Activated CD4-positive, alpha-beta memory T cell treated with anti-CD3 and anti-CD28 coated beads for 36 hours (primary cell): ENCODE measurements at regions of chr6 and their contacts with region 1.

Region 1: GRCh38 chr6:26045065-26045927 is 41.9 kb upstream of the HFE start:
- DNase-seq: peak; percentile 81
- H3K4me3 Mint-ChIP-seq: peak overlapping the region; percentile 81
- H3K27ac Mint-ChIP-seq: peak overlapping the region; percentile 97
- H3K4me1 Mint-ChIP-seq: peaks cover 17% of the 10 kb centered on the region
- H3K27me3 Mint-ChIP-seq: peaks cover 8% of the 10 kb centered on the region

Region 2: DNA sequence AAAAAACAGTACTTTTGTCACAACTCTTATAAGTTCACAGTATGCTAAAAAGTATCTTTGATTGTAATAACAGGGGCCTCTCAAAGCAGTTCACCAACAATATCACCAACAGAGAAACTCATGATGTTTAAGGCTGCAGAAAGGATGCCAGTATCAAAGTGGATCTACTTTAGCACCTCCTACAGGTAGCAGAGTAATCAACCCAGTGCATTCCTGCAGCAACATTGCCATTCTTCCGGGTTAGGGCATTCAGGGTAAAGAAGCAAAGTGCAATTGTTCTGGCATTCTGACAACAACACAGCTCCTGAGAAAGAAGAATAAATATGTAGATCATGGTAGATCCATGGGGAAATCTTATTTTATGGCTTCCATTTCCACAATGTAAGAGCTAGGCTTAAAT is 298.3 kb before region 1 on chr6:
- CTCF ChIA-PET with region 1: no interaction called
- POLR2A ChIA-PET with region 1: no interaction called
- intact Hi-C with region 1: no loop called
- DNase-seq: no peak
- H3K4me3 Mint-ChIP-seq: no peak overlapping the region
- H3K27ac Mint-ChIP-seq: no peak overlapping the region
- H3K4me1 Mint-ChIP-seq: no peaks in the 10 kb centered on the region
- H3K27me3 Mint-ChIP-seq: no peaks in the 10 kb centered on the region

Region 3: DNA sequence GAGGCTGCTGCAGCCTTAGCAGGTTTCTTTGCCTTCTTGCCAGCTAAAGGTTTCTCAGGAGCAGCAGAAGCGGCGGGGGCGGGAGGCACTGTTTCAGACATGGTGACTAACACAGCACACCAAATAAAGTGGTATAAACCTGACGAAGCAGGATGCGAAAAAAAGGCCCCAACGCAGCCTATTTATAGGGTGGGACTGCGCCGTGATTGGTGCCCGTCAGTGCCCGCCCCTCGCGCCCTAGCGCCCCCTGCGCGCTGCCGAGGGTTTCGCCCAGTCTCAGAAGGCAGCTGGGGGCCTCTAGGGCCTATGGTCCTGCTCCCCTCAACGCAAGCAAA is 27.7 kb before region 1 on chr6:
- CTCF ChIA-PET with region 1: interaction called, 6 read pairs
- POLR2A ChIA-PET with region 1: interaction called, 675 read pairs
- intact Hi-C with region 1: loop called (anchors 1 kb)
- DNase-seq: peak; percentile 94
- H3K4me3 Mint-ChIP-seq: peak overlapping the region; percentile 74
- H3K27ac Mint-ChIP-seq: peak overlapping the region; percentile 94
- H3K4me1 Mint-ChIP-seq: peaks cover 31% of the 10 kb centered on the region
- H3K27me3 Mint-ChIP-seq: no peaks in the 10 kb centered on the region

Region 4: DNA sequence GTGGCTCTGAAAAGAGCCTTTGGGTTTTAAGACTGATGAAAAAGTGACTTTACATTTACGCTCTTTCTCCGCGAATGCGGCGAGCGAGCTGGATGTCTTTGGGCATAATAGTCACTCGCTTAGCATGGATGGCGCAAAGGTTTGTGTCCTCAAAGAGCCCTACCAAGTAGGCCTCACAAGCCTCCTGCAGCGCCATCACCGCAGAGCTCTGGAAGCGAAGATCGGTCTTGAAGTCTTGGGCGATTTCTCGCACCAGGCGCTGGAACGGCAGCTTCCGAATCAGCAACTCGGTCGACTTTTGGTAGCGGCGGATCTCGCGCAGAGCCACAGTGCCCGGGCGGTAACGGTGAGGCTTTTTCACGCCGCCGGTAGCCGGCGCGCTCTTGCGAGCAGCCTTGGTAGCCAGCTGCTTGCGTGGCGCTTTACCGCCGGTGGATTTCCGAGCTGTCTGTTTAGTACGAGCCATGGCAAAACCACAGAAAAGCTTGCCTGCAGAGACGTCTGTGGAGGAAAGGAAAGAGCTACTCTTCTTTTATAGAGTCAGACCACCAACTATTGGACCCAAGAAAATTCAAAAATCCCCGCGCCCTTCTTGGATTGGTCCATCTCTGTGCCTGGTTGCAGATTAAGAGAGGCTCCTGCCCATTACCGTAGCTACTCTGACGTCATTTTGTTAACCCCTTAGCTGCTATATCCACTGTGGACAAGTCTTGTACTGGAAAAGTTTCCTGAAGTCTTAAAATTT is 13.5 kb before region 1 on chr6:
- CTCF ChIA-PET with region 1: interaction called, 68 read pairs
- POLR2A ChIA-PET with region 1: interaction called, 675 read pairs
- intact Hi-C with region 1: loop called (anchors 1 kb)
- DNase-seq: peak; percentile 93
- H3K4me3 Mint-ChIP-seq: peak overlapping the region; percentile 83
- H3K27ac Mint-ChIP-seq: peak overlapping the region; percentile 99
- H3K4me1 Mint-ChIP-seq: peaks cover 49% of the 10 kb centered on the region
- H3K27me3 Mint-ChIP-seq: peaks cover 17% of the 10 kb centered on the region

Region 5: GRCh38 chr6:26097268-26097875 is 52.1 kb after region 1 on chr6:
- CTCF ChIA-PET with region 1: interaction called, 10 read pairs
- POLR2A ChIA-PET with region 1: no interaction called
- intact Hi-C with region 1: no loop called
- DNase-seq: peak; percentile 72
- H3K4me3 Mint-ChIP-seq: no peak overlapping the region
- H3K27ac Mint-ChIP-seq: no peak overlapping the region
- H3K4me1 Mint-ChIP-seq: peaks cover 4% of the 10 kb centered on the region
- H3K27me3 Mint-ChIP-seq: no peaks in the 10 kb centered on the region

Region 6: GRCh38 chr6:26180346-26180745 is 135.1 kb after region 1 on chr6:
- CTCF ChIA-PET with region 1: no interaction called
- POLR2A ChIA-PET with region 1: no interaction called
- intact Hi-C with region 1: no loop called
- DNase-seq: no peak
- H3K4me3 Mint-ChIP-seq: no peak overlapping the region
- H3K27ac Mint-ChIP-seq: peak overlapping the region; percentile 6
- H3K4me1 Mint-ChIP-seq: peaks cover 39% of the 10 kb centered on the region
- H3K27me3 Mint-ChIP-seq: no peaks in the 10 kb centered on the region

Region 7: GRCh38 chr6:26196846-26197648 is 151.8 kb after region 1 on chr6:
- CTCF ChIA-PET with region 1: interaction called, 4 read pairs
- POLR2A ChIA-PET with region 1: interaction called, 29 read pairs
- intact Hi-C with region 1: no loop called
- DNase-seq: peak; percentile 84
- H3K4me3 Mint-ChIP-seq: peak overlapping the region; percentile 86
- H3K27ac Mint-ChIP-seq: peak overlapping the region; percentile 99
- H3K4me1 Mint-ChIP-seq: peaks cover 31% of the 10 kb centered on the region
- H3K27me3 Mint-ChIP-seq: peaks cover 3% of the 10 kb centered on the region

Region 8: GRCh38 chr6:26234421-26235296 is 189.4 kb after region 1 on chr6:
- CTCF ChIA-PET with region 1: no interaction called
- POLR2A ChIA-PET with region 1: interaction called, 14 read pairs
- intact Hi-C with region 1: no loop called
- DNase-seq: peak; percentile 85
- H3K4me3 Mint-ChIP-seq: peak overlapping the region; percentile 82
- H3K27ac Mint-ChIP-seq: peak overlapping the region; percentile 99
- H3K4me1 Mint-ChIP-seq: peaks cover 29% of the 10 kb centered on the region
- H3K27me3 Mint-ChIP-seq: peaks cover 12% of the 10 kb centered on the region